ENCODE measurements at regions of chr12 and their contacts with region 1.

Region 1: GRCh38 chr12:127677537-127678131 is 589.3 kb upstream of the TMEM132C start:
- DNase-seq: peak in 6 of 9 donors; percentile 2 to 49 (median 7)
- ATAC-seq: no peak
- H3K4me3 ChIP-seq: no peak overlapping the region
- H3K4me3 Mint-ChIP-seq: no peak overlapping the region
- H3K27ac ChIP-seq: no peak overlapping the region
- H3K27ac Mint-ChIP-seq: no peak overlapping the region
- H3K4me1 ChIP-seq: no peaks in the 10 kb centered on the region
- H3K4me1 Mint-ChIP-seq: no peaks in the 10 kb centered on the region
- H3K27me3 ChIP-seq: no peaks in the 10 kb centered on the region
- H3K27me3 Mint-ChIP-seq: peaks cover 0 to 7% (median 0%) of the 10 kb centered on the region in 5 donors

Region 2: DNA sequence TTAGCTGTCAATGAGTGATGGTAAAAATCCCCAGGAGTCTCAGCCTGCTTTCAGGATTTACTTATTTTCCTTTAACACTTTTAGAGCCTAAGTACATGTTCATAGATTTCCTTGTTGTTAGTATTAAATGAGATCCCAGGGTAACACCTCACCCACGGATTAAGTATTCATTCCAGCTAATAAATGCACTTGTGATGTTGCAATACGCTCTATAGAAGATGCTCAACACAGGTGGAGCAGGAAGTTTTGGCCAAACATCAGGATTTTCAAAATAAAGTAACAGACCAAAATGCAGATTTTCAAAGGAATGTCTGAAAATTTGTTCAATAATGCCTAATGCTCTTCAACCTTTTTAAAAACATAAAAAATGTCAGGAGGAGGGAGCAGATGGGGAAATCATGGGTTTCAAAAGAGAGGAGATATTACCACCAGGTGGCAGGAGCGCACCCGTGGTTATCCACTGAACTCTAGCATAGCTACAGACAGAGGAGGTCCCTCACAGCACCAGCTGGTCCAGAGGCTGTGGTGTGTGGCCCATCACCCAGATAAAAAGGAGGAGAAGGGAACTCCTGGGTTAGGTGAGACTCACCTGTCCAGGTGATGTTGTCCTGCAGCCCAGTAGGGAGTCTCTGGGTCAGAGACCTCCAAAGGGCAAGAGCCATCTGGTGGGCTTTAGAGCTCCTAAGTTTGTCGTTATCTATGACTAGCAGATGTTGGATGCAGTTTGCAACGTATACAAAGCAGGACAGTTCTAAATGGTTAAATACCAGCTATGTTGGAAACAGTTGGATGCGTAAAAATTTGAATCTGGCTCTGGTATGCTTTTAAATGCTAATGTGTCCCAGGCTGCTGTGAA is 569.0 kb before region 1 on chr12:
- CTCF ChIA-PET with region 1: interaction called, 14 read pairs
- POLR2A ChIA-PET with region 1: no interaction called
- intact Hi-C with region 1: no loop called
- DNase-seq: peak in 6 of 9 donors; percentile 7 to 35 (median 32)
- ATAC-seq: peak; percentile 45
- H3K4me3 ChIP-seq: no peak overlapping the region
- H3K4me3 Mint-ChIP-seq: no peak overlapping the region
- H3K27ac ChIP-seq: no peak overlapping the region
- H3K27ac Mint-ChIP-seq: peak overlapping the region in 1 of 9 donors; percentile 12
- H3K4me1 ChIP-seq: no peaks in the 10 kb centered on the region
- H3K4me1 Mint-ChIP-seq: no peaks in the 10 kb centered on the region
- H3K27me3 ChIP-seq: no peaks in the 10 kb centered on the region
- H3K27me3 Mint-ChIP-seq: peaks cover 5 to 56% (median 30%) of the 10 kb centered on the region in 5 donors

Region 3: DNA sequence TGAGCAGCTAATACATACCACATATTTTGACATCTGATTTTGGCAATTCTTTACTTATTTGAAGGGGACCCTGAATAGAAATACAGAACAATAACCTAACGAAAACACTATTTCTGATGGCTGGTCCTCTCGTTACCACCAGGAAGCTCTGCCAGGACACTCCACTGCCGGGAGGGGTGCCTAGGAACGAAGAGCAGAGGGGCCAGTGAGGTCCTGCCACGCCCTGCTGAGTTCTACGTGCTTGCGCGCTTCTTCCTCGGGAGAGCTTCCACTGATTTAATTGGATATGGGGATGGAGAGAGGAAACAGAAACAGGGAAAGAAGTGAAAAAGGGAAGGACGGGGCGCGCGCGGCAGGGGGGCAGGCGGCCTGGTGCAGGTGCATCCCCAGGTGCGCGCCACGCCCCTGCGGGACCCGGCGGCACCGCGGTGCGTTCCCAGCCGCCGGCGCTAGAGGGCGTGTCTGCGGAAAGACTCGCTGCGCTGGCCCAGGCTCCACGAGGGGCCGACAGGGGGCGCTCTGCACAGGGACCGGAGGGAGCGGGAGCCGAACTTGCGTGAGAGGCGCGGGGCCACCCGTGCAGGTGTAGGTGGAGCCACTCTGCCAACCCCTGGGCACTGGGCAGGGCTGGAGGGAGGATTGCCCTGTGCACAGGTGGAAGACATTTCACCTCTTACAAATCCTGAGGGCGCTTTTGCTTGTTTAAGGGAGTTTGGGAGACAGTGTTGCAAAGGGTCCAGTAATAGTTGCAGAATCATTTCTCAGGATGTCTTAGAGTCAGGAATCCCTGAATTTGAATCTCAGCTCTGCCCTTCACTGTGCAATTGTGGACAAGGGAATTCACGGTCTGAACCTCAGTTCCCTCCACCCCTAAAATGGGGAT is 397.0 kb before region 1 on chr12:
- CTCF ChIA-PET with region 1: no interaction called
- POLR2A ChIA-PET with region 1: no interaction called
- intact Hi-C with region 1: loop called in 1 of 2 experiments (anchors 1 kb)
- DNase-seq: peak in 8 of 9 donors; percentile 9 to 84 (median 34)
- ATAC-seq: peak; percentile 81
- H3K4me3 ChIP-seq: no peak overlapping the region
- H3K4me3 Mint-ChIP-seq: no peak overlapping the region
- H3K27ac ChIP-seq: no peak overlapping the region
- H3K27ac Mint-ChIP-seq: no peak overlapping the region
- H3K4me1 ChIP-seq: no peaks in the 10 kb centered on the region
- H3K4me1 Mint-ChIP-seq: peaks cover 0 to 9% (median 0%) of the 10 kb centered on the region in 7 donors
- H3K27me3 ChIP-seq: no peaks in the 10 kb centered on the region
- H3K27me3 Mint-ChIP-seq: peaks cover 0 to 19% (median 15%) of the 10 kb centered on the region in 5 donors

Region 4: GRCh38 chr12:127381048-127381668 is 296.5 kb before region 1 on chr12:
- CTCF ChIA-PET with region 1: no interaction called
- POLR2A ChIA-PET with region 1: no interaction called
- intact Hi-C with region 1: loop called in 1 of 2 experiments (anchors 1 kb)
- DNase-seq: peak in 5 of 9 donors; percentile 1 to 63 (median 11)
- ATAC-seq: no peak
- H3K4me3 ChIP-seq: no peak overlapping the region
- H3K4me3 Mint-ChIP-seq: peak overlapping the region in 1 of 10 donors; percentile 35
- H3K27ac ChIP-seq: no peak overlapping the region
- H3K27ac Mint-ChIP-seq: no peak overlapping the region
- H3K4me1 ChIP-seq: no peaks in the 10 kb centered on the region
- H3K4me1 Mint-ChIP-seq: peaks cover 0 to 5% (median 0%) of the 10 kb centered on the region in 7 donors
- H3K27me3 ChIP-seq: no peaks in the 10 kb centered on the region
- H3K27me3 Mint-ChIP-seq: peaks cover 5 to 10% (median 7%) of the 10 kb centered on the region in 5 donors

Region 5: DNA sequence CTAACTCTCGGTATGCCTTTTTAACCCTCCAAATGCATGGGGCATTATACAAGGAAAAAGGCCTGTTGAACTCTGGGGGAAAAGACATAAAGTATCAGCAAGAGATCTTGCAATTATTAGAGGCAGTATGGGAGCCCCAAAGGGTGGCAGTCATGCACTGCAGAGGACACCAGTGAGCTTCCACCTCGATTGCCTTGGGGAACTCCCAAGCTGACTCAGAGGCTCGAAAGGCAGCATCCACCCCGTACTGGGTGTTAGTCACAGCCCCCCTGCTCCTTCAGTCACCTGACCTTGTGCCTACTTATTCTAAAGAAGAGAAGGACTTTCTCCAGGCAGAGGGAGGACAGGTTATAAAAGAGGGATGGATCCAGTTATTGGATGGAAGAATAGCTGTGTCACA is 192.1 kb before region 1 on chr12:
- CTCF ChIA-PET with region 1: no interaction called
- POLR2A ChIA-PET with region 1: no interaction called
- intact Hi-C with region 1: loop called in 1 of 2 experiments (anchors 1 kb)
- DNase-seq: peak in 1 of 9 donors; percentile 56
- ATAC-seq: no peak
- H3K4me3 ChIP-seq: no peak overlapping the region
- H3K4me3 Mint-ChIP-seq: no peak overlapping the region
- H3K27ac ChIP-seq: no peak overlapping the region
- H3K27ac Mint-ChIP-seq: peak overlapping the region in 1 of 9 donors; percentile 44
- H3K4me1 ChIP-seq: no peaks in the 10 kb centered on the region
- H3K4me1 Mint-ChIP-seq: peaks cover 0 to 9% (median 0%) of the 10 kb centered on the region in 7 donors
- H3K27me3 ChIP-seq: no peaks in the 10 kb centered on the region
- H3K27me3 Mint-ChIP-seq: no peaks in the 10 kb centered on the region

Region 6: GRCh38 chr12:127664901-127665300 is 12.7 kb before region 1 on chr12:
- CTCF ChIA-PET with region 1: no interaction called
- POLR2A ChIA-PET with region 1: no interaction called
- intact Hi-C with region 1: no loop called
- DNase-seq: no peak
- ATAC-seq: no peak
- H3K4me3 ChIP-seq: no peak overlapping the region
- H3K4me3 Mint-ChIP-seq: no peak overlapping the region
- H3K27ac ChIP-seq: no peak overlapping the region
- H3K27ac Mint-ChIP-seq: no peak overlapping the region
- H3K4me1 ChIP-seq: no peaks in the 10 kb centered on the region
- H3K4me1 Mint-ChIP-seq: no peaks in the 10 kb centered on the region
- H3K27me3 ChIP-seq: no peaks in the 10 kb centered on the region
- H3K27me3 Mint-ChIP-seq: peaks cover 0 to 7% (median 0%) of the 10 kb centered on the region in 5 donors

Measured in naive thymus-derived CD4-positive, alpha-beta T cell (primary cell).